ENCODE measurements at regions of chr17 and their contacts with region 1.

Region 1: DNA sequence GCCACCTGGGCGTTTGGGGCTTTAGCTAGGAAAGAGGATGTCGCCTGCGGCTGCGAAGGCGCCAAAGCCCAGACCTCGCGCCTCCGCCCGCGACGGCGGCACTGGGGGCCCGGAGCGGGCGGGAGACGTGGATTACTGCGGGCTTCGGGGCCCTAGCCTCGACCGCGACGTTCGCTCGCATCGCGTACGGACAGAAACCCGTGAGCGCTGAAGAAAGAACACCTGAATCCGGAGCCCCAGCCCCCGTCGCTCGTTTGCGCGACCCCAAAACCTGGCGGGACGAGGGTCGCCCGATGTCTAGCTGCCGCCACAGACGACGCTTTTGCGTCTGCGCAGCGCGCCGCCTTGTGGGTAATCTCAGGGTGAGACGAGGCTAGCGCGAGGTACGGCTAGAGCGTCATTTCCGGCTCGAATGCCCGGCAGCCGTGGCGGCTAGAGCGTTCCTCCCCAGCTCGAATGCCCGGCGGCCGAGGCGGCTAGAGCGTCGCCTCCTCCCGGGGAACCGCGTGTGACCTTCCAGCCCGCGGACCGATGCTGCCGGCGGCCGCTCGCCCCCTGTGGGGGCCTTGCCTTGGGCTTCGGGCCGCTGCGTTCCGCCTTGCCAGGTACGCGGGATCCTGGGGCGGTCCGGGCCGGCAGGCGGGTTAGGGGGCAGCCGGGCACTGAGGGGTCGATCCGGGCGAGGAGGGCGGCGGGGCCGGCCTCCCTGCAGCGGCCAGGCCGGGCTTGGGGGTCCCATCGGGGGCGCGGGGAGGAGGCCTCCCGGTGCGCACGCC is at the start of gene MRPL12:
- DNase-seq: peak; percentile 98
- total RNA-seq, gene MRPL12: 117 TPM

Region 2: GRCh38 chr17:81683584-81684237 is 19.4 kb before region 1 on chr17 and contains the starts of genes ARL16 and HGS:
- intact Hi-C with region 1: loop called (anchors 2 kb)
- DNase-seq: peak; percentile 99
- total RNA-seq, gene ARL16: 19.1 TPM
- total RNA-seq, gene HGS: 56.2 TPM

Region 3: DNA sequence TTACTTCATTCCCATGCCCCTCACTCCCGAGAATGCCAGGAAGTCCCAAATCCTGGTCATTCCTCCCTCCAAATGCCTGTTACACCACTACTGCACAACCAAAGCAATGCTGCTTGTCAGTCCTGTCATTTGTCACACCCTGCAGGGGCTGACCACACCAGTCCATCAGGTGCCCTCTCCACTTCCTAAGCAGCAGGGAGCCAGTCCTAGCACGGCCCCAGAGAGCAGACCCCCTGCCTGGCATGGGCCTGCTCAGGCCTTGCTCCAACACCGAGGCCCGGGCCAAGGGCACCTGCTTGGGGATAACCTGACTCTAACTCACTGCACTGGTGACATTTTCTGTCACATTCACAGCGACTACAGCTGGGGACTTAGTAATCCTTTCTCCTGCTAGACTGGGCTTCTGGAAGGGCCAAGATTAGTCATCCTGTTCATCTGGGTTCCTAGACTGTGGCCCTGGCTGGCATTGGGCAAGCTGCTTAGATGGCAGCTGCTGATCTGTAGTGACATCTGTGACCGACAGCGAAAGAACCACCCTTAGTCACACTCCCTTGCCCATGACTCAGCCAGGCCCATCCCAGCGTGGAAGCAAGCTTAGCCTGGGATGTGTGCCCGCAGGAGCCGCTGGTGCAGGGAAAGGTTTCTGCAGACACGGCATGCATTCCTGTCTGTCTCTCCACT is 182.8 kb after region 1 on chr17:
- intact Hi-C with region 1: no loop called
- DNase-seq: no peak